Activated CD8-positive, alpha-beta T cell treated with anti-CD3 and anti-CD28 coated beads, Interleukin-2, amount 10 ng/mL, durations not matched to agents 7 days and 5 days (primary cell): ENCODE measurements at regions of chr16 and their contacts with region 1.

Region 1: GRCh38 chr16:30571695-30572600 is at the start of gene ZNF688:
- DNase-seq: peak; percentile 98
- ATAC-seq: peak; percentile 87
- H3K4me3 Mint-ChIP-seq: peak within 1 kb of the TSS; percentile 98
- H3K27ac Mint-ChIP-seq: peak within 1 kb of the TSS; percentile 94
- H3K4me1 Mint-ChIP-seq: peaks cover 48% of the 10 kb centered on the region
- H3K27me3 Mint-ChIP-seq: no peaks in the 10 kb centered on the region
- total RNA-seq, gene ZNF688: 12.5 to 13.4 TPM

Region 2: GRCh38 chr16:30557957-30558788 is 13.8 kb before region 1 on chr16 and contains the start of gene ZNF764:
- CTCF ChIA-PET with region 1: interaction called, 22 read pairs
- POLR2A ChIA-PET with region 1: interaction called, 43 read pairs
- DNase-seq: peak; percentile 99
- ATAC-seq: peak; percentile 96
- H3K4me3 Mint-ChIP-seq: peak within 1 kb of the TSS; percentile 87
- H3K27ac Mint-ChIP-seq: peak within 1 kb of the TSS; percentile 86
- H3K4me1 Mint-ChIP-seq: peaks cover 46% of the 10 kb centered on the region
- H3K27me3 Mint-ChIP-seq: peaks cover 3% of the 10 kb centered on the region
- total RNA-seq, gene ZNF764: 15.2 to 15.4 TPM

Region 3: GRCh38 chr16:30585400-30586189 is 13.6 kb after region 1 on chr16 and contains the start of gene ZNF785:
- CTCF ChIA-PET with region 1: interaction called, 11 read pairs
- POLR2A ChIA-PET with region 1: interaction called, 48 read pairs
- DNase-seq: peak; percentile 98
- ATAC-seq: peak; percentile 98
- H3K4me3 Mint-ChIP-seq: peak within 1 kb of the TSS; percentile 96
- H3K27ac Mint-ChIP-seq: peak within 1 kb of the TSS; percentile 87
- H3K4me1 Mint-ChIP-seq: peaks cover 30% of the 10 kb centered on the region
- H3K27me3 Mint-ChIP-seq: no peaks in the 10 kb centered on the region
- total RNA-seq, gene ZNF785: 11.7 to 13.7 TPM

Region 4: DNA sequence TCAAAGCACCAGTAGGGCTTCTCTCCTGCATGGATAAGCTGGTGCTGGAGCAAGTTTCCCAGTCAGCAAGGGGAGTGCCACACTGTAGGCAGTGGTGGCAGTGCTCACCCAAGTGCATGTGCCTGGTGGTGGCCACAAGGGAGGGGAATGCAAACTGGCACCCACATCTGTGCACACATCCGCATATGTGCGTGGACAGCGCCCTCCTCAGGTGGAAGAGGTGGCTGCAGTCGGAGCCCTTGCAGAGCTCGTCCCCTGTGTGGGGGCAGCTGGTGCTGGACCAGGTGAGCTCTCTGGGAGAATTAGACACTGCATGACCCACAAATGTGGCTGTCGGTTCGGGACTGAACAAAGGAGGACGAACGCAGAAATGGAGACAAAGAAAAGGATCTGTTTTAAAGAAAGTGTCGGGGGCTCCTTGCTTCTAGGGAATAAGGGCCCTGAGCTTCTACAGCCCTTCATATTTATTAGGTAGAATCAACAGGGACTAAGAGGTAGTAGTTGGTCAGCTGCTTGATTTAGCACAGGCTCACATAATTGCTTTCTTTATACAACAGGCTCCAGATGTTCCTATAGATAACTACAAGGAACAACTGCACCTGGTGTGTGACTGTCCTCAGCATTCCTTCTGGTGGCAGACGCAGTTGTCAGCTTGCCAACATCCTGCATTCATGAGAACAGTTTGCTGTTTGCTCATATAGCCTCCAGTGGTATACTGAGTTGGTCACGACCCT is 43.6 kb after region 1 on chr16:
- CTCF ChIA-PET with region 1: interaction called, 12 read pairs
- POLR2A ChIA-PET with region 1: interaction called, 5 read pairs
- DNase-seq: peak; percentile 83
- ATAC-seq: peak; percentile 68
- H3K4me3 Mint-ChIP-seq: no peak overlapping the region
- H3K27ac Mint-ChIP-seq: no peak overlapping the region
- H3K4me1 Mint-ChIP-seq: peaks cover 14% of the 10 kb centered on the region
- H3K27me3 Mint-ChIP-seq: peaks cover 13% of the 10 kb centered on the region

Region 5: DNA sequence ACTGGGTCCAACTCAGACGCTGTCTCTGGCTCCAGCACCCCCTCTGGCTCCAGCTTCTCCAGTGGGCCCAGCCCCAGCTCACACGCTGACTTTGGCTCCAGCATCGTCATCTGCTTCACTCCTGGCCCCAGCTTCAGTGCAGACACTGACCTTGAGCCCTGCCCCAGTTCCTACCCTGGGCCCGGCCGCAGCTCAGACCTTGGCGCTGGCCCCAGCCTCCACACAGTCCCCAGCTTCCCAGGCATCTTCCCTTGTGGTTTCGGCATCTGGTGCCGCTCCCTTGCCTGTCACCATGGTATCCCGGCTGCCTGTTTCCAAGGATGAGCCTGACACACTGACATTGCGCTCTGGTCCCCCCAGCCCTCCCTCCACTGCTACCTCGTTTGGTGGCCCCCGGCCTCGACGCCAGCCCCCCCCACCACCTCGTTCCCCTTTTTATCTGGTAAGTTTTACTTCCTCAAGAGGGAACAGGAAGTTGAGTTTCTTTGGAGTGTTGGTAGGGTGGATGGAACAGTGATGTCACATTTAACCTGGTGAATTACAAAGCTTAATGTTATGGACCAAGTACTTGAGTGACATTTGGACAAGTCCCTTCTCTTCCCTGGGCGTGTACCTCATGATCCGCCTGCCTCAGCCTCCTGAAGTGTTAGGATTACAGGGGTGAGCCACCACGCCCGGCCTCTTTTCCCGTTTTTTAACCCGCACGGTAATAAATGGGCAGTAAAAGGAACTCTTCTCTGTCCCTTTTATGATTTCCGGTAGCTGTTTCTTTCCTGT is 152.9 kb after region 1 on chr16:
- CTCF ChIA-PET with region 1: no interaction called
- POLR2A ChIA-PET with region 1: no interaction called
- DNase-seq: no peak
- ATAC-seq: no peak
- H3K4me3 Mint-ChIP-seq: no peak overlapping the region
- H3K27ac Mint-ChIP-seq: no peak overlapping the region
- H3K4me1 Mint-ChIP-seq: peaks cover 3% of the 10 kb centered on the region
- H3K27me3 Mint-ChIP-seq: no peaks in the 10 kb centered on the region

Region 6: DNA sequence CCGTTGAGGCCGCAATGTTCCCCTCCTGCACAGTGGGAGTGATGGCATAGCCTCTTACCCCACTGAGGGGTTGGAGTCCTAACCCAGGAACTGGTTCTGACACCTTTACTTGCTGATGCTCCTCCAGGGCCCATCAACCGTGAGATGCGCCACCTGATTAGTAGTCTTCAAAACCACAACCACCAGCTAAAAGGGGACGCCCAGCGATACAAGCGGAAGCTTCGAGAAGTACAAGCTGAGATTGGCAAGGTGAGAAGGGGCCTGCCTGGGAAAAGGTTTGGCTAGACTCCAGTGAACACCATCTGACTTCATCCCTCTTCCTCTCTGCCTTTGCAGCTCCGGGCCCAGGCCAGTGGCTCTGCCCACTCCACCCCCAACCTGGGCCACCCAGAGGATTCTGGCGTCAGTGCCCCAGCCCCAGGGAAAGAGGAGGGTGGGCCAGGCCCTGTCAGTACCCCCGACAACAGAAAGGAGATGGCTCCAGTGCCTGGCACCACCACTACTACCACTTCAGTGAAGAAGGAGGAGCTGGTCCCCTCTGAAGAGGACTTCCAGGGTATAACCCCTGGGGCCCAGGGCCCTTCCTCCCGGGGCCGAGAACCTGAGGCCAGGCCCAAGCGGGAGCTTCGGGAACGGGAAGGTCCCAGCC is 195.9 kb after region 1 on chr16:
- CTCF ChIA-PET with region 1: no interaction called
- POLR2A ChIA-PET with region 1: no interaction called
- DNase-seq: no peak
- ATAC-seq: no peak
- H3K4me3 Mint-ChIP-seq: no peak overlapping the region
- H3K27ac Mint-ChIP-seq: no peak overlapping the region
- H3K4me1 Mint-ChIP-seq: peaks cover 26% of the 10 kb centered on the region
- H3K27me3 Mint-ChIP-seq: no peaks in the 10 kb centered on the region